Prostate gland (tissue), 2 donors: ENCODE measurements at regions of chr6 and their contacts with region 1.

Region 1: DNA sequence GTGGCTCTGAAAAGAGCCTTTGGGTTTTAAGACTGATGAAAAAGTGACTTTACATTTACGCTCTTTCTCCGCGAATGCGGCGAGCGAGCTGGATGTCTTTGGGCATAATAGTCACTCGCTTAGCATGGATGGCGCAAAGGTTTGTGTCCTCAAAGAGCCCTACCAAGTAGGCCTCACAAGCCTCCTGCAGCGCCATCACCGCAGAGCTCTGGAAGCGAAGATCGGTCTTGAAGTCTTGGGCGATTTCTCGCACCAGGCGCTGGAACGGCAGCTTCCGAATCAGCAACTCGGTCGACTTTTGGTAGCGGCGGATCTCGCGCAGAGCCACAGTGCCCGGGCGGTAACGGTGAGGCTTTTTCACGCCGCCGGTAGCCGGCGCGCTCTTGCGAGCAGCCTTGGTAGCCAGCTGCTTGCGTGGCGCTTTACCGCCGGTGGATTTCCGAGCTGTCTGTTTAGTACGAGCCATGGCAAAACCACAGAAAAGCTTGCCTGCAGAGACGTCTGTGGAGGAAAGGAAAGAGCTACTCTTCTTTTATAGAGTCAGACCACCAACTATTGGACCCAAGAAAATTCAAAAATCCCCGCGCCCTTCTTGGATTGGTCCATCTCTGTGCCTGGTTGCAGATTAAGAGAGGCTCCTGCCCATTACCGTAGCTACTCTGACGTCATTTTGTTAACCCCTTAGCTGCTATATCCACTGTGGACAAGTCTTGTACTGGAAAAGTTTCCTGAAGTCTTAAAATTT is 55.5 kb upstream of the HFE start:
- DNase-seq: peak; percentile 88
- H3K4me3 ChIP-seq: peak overlapping the region; percentile 42 to 50
- H3K27ac ChIP-seq: peak overlapping the region; percentile 82 to 84
- H3K4me1 ChIP-seq: no peaks in the 10 kb centered on the region
- H3K27me3 ChIP-seq: no peaks in the 10 kb centered on the region
- CTCF ChIP-seq: peak in 2 of 4 experiments; percentile 11 to 20
- POLR2A ChIP-seq: peak; percentile 20

Region 2: GRCh38 chr6:25882051-25882496 is 149.7 kb before region 1 on chr6:
- intact Hi-C with region 1: no loop called
- DNase-seq: no peak
- H3K4me3 ChIP-seq: no peak overlapping the region
- H3K27ac ChIP-seq: no peak overlapping the region
- H3K4me1 ChIP-seq: no peaks in the 10 kb centered on the region
- H3K27me3 ChIP-seq: no peaks in the 10 kb centered on the region
- CTCF ChIP-seq: no peak
- POLR2A ChIP-seq: no peak

Region 3: DNA sequence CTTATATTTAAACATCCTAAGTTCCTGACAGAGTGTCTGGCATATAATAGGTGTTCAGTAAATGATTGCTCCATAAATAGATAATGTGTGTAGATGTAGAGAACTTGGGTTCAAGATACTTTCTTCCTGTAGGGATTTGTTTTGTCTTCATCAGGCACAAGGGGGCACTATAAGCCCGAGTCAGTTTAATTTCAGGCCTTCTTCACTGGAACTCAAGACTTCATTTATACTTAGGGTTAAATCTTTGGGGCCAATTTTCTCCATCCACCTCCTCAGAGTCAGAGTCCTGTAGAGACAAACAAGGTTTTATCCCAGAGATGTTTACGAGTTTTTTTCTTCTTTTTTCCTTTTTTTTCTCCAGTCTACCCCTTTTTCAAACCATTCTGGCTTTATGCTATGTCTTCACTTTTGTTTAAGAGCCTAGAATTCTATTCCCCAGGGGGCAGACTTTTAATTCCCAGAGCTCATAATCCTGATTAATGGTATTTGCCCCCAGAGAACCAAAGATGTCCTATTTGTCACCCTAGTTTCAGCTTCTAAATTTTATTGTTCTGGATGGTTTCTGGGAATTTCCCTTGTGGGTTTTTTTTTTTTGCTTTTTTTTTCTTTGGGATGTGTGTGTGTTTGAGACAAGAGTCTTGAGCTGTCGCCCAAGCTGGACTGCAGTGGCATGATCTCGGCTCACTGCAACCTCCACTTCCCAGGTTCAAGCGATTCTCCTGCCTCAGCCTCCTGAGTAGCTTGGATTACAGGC is 143.8 kb after region 1 on chr6:
- intact Hi-C with region 1: loop called (anchors 5 kb)
- DNase-seq: no peak
- H3K4me3 ChIP-seq: no peak overlapping the region
- H3K27ac ChIP-seq: no peak overlapping the region
- H3K4me1 ChIP-seq: no peaks in the 10 kb centered on the region
- H3K27me3 ChIP-seq: no peaks in the 10 kb centered on the region
- CTCF ChIP-seq: peak in 3 of 4 experiments; percentile 43 to 62 (median 59)
- POLR2A ChIP-seq: no peak

Region 4: DNA sequence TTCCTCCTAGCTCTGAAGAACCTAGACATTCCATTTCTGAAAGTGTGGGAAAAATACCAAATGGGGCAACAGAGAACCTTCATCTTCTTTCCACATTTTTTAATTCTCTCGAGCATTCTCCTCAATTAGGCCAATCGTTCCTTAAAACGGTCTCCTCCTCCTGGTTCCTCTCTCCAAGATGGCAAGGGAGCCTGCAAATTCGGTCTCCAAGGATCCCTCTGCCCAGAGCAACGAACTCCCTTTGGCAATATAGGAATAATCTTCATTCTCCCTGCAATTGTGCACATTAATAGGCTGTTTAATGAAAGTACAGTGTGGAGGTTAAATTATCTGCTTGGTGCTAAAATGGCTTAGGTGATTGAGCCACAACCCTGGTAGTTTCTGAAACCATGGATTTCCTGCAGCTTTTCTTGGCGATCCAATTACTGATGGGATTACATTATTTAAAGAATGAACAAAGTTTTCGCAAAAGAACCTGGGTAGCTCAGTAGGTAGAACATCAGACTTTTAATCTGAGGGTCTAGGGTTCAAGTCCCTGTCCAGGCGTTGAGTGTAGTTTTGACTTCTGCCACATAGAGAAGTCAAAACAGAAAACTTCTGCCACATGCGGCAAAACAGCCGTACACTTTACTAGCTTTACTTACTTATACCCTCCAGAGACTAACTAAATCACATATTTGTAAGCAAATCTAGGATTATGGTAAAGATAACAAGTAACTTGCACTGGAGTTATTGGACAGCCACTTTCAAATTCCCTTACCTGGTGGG is 1544.0 kb after region 1 on chr6:
- intact Hi-C with region 1: no loop called
- DNase-seq: no peak
- H3K4me3 ChIP-seq: no peak overlapping the region
- H3K27ac ChIP-seq: no peak overlapping the region
- H3K4me1 ChIP-seq: no peaks in the 10 kb centered on the region
- H3K27me3 ChIP-seq: peaks cover 4% of the 10 kb centered on the region
- CTCF ChIP-seq: no peak
- POLR2A ChIP-seq: no peak